ENCODE measurements at regions of chr16 and their contacts with region 1.

Region 1: GRCh38 chr16:11255737-11256660 is at the start of gene SOCS1:
- DNase-seq: peak; percentile 85 to 91
- H3K4me3 ChIP-seq: peak within 1 kb of the TSS; percentile 83 to 87
- H3K27ac ChIP-seq: peak within 1 kb of the TSS; percentile 93 to 98
- H3K4me1 ChIP-seq: peaks cover 0 to 6% of the 10 kb centered on the region in 2 donors
- H3K27me3 ChIP-seq: no peaks in the 10 kb centered on the region
- CTCF ChIP-seq: peak; percentile 63 to 99 (median 94)
- POLR2A ChIP-seq: peak; percentile 95 to 99
- total RNA-seq, gene SOCS1: 6.4 to 45.3 (median 7.6) TPM in 3 of 4 donors, not detected in the other

Region 2: DNA sequence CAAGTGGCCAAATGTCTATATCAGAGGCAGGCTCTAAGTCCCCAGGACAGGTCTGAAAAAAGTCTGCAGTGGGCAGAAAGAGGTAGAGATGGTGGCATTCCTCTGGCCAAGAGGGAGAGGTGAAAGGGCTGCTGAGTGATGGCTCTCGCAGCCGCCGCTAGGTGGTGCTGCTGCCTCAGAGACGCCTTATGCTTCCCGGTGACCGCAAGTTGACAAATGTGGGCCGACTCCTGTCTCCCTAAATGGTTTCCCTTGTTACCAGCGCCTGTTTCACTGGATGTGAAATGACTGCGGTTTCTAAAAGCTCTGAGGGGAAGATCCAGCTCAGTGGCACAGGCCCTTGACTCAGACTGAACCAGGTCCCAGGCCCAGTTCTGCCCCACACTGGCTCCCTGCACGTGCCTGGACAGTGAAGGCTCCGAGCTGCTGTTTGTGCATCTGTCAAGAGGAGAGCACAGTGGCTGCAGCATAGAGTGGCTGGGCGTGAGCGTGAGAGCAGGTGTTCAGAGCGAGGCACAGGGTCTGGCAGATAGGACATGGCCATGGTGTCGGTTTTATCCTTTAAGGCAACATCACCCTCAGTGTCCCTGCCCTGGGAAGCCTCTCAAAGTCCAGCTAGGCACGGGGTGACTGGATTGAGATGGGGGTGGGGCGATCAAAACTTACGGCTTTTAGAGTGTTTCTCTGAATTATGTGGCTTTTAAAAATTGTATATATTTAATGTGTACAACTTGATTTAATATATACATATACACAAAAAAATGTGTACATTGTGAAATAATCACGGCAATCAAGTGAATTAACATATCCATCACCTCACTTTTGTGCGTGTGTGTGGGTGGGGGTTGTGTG is 291.7 kb before region 1 on chr16:
- intact Hi-C with region 1: loop called (anchors 2 kb)
- DNase-seq: peak; percentile 78 to 86
- H3K4me3 ChIP-seq: no peak overlapping the region
- H3K27ac ChIP-seq: no peak overlapping the region
- H3K4me1 ChIP-seq: no peaks in the 10 kb centered on the region
- H3K27me3 ChIP-seq: no peaks in the 10 kb centered on the region
- CTCF ChIP-seq: peak; percentile 89 to 97 (median 94)
- POLR2A ChIP-seq: peak in 1 of 2 donors; percentile 14

Region 3: GRCh38 chr16:11310997-11311561 is 55.1 kb after region 1 on chr16:
- intact Hi-C with region 1: no loop called
- DNase-seq: no peak
- H3K4me3 ChIP-seq: no peak overlapping the region
- H3K27ac ChIP-seq: peak overlapping the region in 1 of 2 donors; percentile 18
- H3K4me1 ChIP-seq: no peaks in the 10 kb centered on the region
- H3K27me3 ChIP-seq: no peaks in the 10 kb centered on the region
- CTCF ChIP-seq: no peak
- POLR2A ChIP-seq: no peak

Region 4: GRCh38 chr16:11356573-11357331 is 100.8 kb after region 1 on chr16:
- intact Hi-C with region 1: loop called (anchors 5 kb)
- DNase-seq: peak; percentile 64 to 68
- H3K4me3 ChIP-seq: no peak overlapping the region
- H3K27ac ChIP-seq: peak overlapping the region in 1 of 2 donors; percentile 43
- H3K4me1 ChIP-seq: peaks cover 0 to 12% of the 10 kb centered on the region in 2 donors
- H3K27me3 ChIP-seq: no peaks in the 10 kb centered on the region
- CTCF ChIP-seq: peak; percentile 35 to 57 (median 46)
- POLR2A ChIP-seq: no peak

Measured in uterus (tissue), 4 donors.